IMR-90 (cell line): ENCODE measurements at regions of chr10 and their contacts with region 1.

Region 1: DNA sequence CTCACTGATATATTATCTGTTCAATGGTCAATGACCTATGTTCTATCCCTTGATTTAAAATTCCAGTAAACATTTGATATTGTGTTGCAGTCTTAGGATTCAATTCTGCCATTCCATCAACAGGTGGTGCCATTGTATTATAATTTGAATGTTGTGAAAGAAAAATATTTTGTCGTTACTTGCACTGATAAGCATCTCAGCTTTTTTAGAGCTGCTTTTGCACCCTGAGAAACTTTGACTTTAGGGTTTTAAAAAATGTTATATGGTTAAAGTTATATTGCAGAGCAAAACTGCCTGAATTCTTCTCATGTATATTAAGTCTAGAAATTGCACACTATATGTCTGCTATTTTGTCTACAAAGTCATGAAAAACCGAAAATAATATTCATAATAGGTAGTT is 18.8 kb upstream of the MINDY3 start:
- DNase-seq: peak; percentile 40
- ATAC-seq: no peak; the same call in 1 of the 2 replicates
- H3K4me3 ChIP-seq: no peak overlapping the region
- H3K27ac ChIP-seq: no peak overlapping the region
- H3K4me1 ChIP-seq: no peaks in the 10 kb centered on the region
- H3K27me3 ChIP-seq: peaks cover 6% of the 10 kb centered on the region
- CTCF ChIP-seq: peak; percentile 66
- POLR2A ChIP-seq: no peak
- RAD21 ChIP-seq: peak; percentile 62

Region 2: DNA sequence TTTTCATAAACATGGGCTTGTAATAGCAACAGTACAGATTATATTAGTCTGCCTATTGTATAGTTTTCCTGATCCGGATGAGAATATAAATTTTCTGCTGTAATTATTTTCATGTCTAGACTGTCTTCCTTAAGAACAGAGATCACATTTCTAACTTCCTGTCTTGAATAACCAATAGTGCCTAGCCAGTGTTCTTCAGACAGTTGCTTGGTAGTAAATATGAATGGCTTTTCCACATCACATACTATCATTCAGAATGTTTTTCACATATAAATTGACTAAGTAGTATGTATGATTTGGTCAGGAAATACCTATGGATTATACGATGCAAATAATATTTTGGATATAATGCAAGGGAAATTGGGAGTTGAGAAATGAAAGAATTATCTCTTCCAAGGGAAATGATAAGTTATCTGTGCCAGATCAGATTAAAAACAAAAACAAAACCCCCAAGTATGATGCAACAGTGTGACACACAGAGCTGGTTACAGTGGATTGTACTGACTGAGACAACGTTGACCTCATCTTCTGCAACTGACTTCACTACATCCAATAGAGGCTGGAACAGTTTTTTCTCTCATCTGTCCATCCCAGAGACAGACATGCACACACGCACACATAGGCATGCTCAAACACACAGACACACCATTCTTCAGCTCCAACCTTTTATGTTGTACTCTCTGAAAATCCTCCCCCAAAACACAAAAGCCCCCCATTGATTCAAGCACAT is 175.7 kb before region 1 on chr10:
- CTCF ChIA-PET with region 1: no interaction called
- POLR2A ChIA-PET with region 1: no interaction called
- dilution Hi-C with region 1: no loop called
- in situ Hi-C with region 1: no loop called
- intact Hi-C with region 1: no loop called
- DNase-seq: no peak
- ATAC-seq: no peak
- H3K4me3 ChIP-seq: no peak overlapping the region
- H3K27ac ChIP-seq: no peak overlapping the region
- H3K4me1 ChIP-seq: no peaks in the 10 kb centered on the region
- H3K27me3 ChIP-seq: peaks cover 3% of the 10 kb centered on the region
- CTCF ChIP-seq: no peak
- POLR2A ChIP-seq: no peak
- RAD21 ChIP-seq: no peak

Region 3: GRCh38 chr10:15719899-15720634 is 159.0 kb before region 1 on chr10 and contains the start of gene ITGA8:
- CTCF ChIA-PET with region 1: no interaction called
- POLR2A ChIA-PET with region 1: no interaction called
- dilution Hi-C with region 1: no loop called
- in situ Hi-C with region 1: no loop called
- intact Hi-C with region 1: no loop called
- DNase-seq: no peak
- ATAC-seq: peak; percentile 64; the same call in 1 of the 2 replicates
- H3K4me3 ChIP-seq: peak within 1 kb of the TSS; percentile 24; the same call in 1 of the 2 replicates
- H3K27ac ChIP-seq: no peak within 1 kb of the TSS
- H3K4me1 ChIP-seq: no peaks in the 10 kb centered on the region
- H3K27me3 ChIP-seq: peaks cover 43% of the 10 kb centered on the region
- CTCF ChIP-seq: 0 out of 2 replicates have a peak, but pooled peaks have one; percentile 6
- POLR2A ChIP-seq: no peak
- RAD21 ChIP-seq: no peak
- total RNA-seq, gene ITGA8: under 0.01 TPM in 2 replicates

Region 4: GRCh38 chr10:16809074-16809718 is 930.1 kb after region 1 on chr10:
- CTCF ChIA-PET with region 1: no interaction called
- POLR2A ChIA-PET with region 1: no interaction called
- dilution Hi-C with region 1: no loop called
- in situ Hi-C with region 1: no loop called
- intact Hi-C with region 1: loop called (anchors 1 kb)
- DNase-seq: peak; percentile 36
- ATAC-seq: peak; percentile 81
- H3K4me3 ChIP-seq: no peak overlapping the region
- H3K27ac ChIP-seq: no peak overlapping the region
- H3K4me1 ChIP-seq: no peaks in the 10 kb centered on the region
- H3K27me3 ChIP-seq: no peaks in the 10 kb centered on the region
- CTCF ChIP-seq: peak; percentile 63
- POLR2A ChIP-seq: no peak
- RAD21 ChIP-seq: peak; percentile 56